CD4-positive, alpha-beta memory T cell (primary cell): ENCODE measurements at regions of chr1 and their contacts with region 1.

Region 1: GRCh38 chr1:58652651-58653184 is 47.1 kb downstream of the MYSM1 start:
- DNase-seq: peak; percentile 43 to 63 (median 60)
- H3K4me3 ChIP-seq: no peak overlapping the region
- H3K4me3 Mint-ChIP-seq: no peak overlapping the region
- H3K27ac ChIP-seq: no peak overlapping the region
- H3K27ac Mint-ChIP-seq: peak overlapping the region in 1 of 7 donors; percentile 32
- H3K4me1 ChIP-seq: peaks cover 14% of the 10 kb centered on the region
- H3K4me1 Mint-ChIP-seq: peaks cover 11 to 29% (median 15%) of the 10 kb centered on the region in 4 donors
- H3K27me3 ChIP-seq: no peaks in the 10 kb centered on the region
- H3K27me3 Mint-ChIP-seq: no peaks in the 10 kb centered on the region

Region 2: GRCh38 chr1:58683519-58683918 is 30.8 kb after region 1 on chr1:
- CTCF ChIA-PET with region 1: interaction called, 12 read pairs
- POLR2A ChIA-PET with region 1: no interaction called
- intact Hi-C with region 1: no loop called
- DNase-seq: no peak
- H3K4me3 ChIP-seq: no peak overlapping the region
- H3K4me3 Mint-ChIP-seq: no peak overlapping the region
- H3K27ac ChIP-seq: no peak overlapping the region
- H3K27ac Mint-ChIP-seq: peak overlapping the region in 1 of 7 donors; percentile 36
- H3K4me1 ChIP-seq: peaks cover 10% of the 10 kb centered on the region
- H3K4me1 Mint-ChIP-seq: peaks cover 16 to 22% (median 21%) of the 10 kb centered on the region in 4 donors
- H3K27me3 ChIP-seq: no peaks in the 10 kb centered on the region
- H3K27me3 Mint-ChIP-seq: no peaks in the 10 kb centered on the region

Region 3: GRCh38 chr1:59285691-59286090 is 633.0 kb after region 1 on chr1:
- CTCF ChIA-PET with region 1: no interaction called
- POLR2A ChIA-PET with region 1: no interaction called
- intact Hi-C with region 1: no loop called
- DNase-seq: no peak
- H3K4me3 ChIP-seq: no peak overlapping the region
- H3K4me3 Mint-ChIP-seq: no peak overlapping the region
- H3K27ac ChIP-seq: no peak overlapping the region
- H3K27ac Mint-ChIP-seq: no peak overlapping the region
- H3K4me1 ChIP-seq: no peaks in the 10 kb centered on the region
- H3K4me1 Mint-ChIP-seq: peaks cover 0 to 2% (median 0%) of the 10 kb centered on the region in 4 donors
- H3K27me3 ChIP-seq: no peaks in the 10 kb centered on the region
- H3K27me3 Mint-ChIP-seq: peaks cover 6% of the 10 kb centered on the region in 2 donors

Region 4: GRCh38 chr1:59759156-59759925 is 1106.6 kb after region 1 on chr1:
- CTCF ChIA-PET with region 1: interaction called, 12 read pairs
- POLR2A ChIA-PET with region 1: no interaction called
- intact Hi-C with region 1: loop called (anchors 1 kb)
- DNase-seq: peak; percentile 58 to 67 (median 63)
- H3K4me3 ChIP-seq: no peak overlapping the region
- H3K4me3 Mint-ChIP-seq: peak overlapping the region in 3 of 8 donors; percentile 47 to 59 (median 59)
- H3K27ac ChIP-seq: no peak overlapping the region
- H3K27ac Mint-ChIP-seq: peak overlapping the region in 1 of 7 donors; percentile 53
- H3K4me1 ChIP-seq: peaks cover 3% of the 10 kb centered on the region
- H3K4me1 Mint-ChIP-seq: peaks cover 0 to 4% (median 3%) of the 10 kb centered on the region in 4 donors
- H3K27me3 ChIP-seq: no peaks in the 10 kb centered on the region
- H3K27me3 Mint-ChIP-seq: no peaks in the 10 kb centered on the region